ENCODE measurements at regions of chr2 and their contacts with region 1.

Region 1: GRCh38 chr2:71331581-71332434 is at the start of gene ZNF638:
- DNase-seq: peak; percentile 89 to 95
- H3K4me3 ChIP-seq: peak within 1 kb of the TSS; percentile 92
- H3K4me3 Mint-ChIP-seq: peak within 1 kb of the TSS; percentile 98
- H3K27ac Mint-ChIP-seq: peak within 1 kb of the TSS; percentile 99
- H3K4me1 ChIP-seq: peaks cover 11% of the 10 kb centered on the region; the same call in 1 of the 2 replicates
- H3K4me1 Mint-ChIP-seq: peaks cover 23% of the 10 kb centered on the region
- H3K27me3 ChIP-seq: no peaks in the 10 kb centered on the region
- H3K27me3 Mint-ChIP-seq: no peaks in the 10 kb centered on the region
- CTCF ChIP-seq: peak; percentile 68 to 77
- total RNA-seq, gene ZNF638: 133 and 134 TPM in 2 replicates

Region 2: DNA sequence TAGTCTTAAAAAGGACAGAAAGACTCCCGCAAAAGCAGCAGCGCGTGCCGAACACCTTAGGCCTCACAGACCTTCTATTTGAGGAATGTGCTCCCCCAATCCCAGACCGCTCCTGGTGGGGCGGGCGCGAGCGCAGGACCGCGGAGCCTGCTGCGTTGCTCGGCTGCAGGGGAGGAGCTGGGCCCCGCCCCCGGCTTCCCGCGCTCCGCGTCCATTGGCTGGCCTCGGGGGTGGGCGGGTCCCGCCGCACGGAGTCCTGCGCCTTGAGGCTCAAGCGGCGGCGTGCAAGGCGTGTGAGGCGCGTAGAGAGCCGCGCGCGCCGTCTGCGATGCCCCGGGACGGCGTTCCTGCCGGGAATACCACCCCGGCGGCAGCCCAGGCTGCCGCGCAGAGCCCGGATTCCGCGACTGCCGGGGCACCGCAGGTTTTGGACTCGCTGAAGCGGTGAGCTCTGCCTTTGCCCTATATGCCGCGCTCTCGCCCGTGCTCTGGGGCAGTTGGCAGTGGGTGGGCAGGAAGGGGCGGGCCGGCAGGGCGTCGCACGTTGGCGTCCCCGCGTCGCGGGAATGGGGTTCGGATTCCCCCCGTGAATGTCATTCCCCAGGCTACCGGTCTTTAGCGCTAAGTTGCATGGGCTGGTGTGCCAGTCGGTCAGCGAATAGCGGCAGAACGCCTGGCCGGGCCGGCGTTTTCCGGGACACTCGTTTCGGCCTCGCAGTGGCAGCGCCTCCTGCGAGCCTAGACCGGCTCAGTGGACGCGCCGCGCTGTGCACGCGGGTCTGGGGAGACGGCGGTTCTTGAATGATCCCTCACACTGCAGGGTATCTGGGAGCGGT is 55.3 kb before region 1 on chr2:
- CTCF ChIA-PET with region 1: interaction called, 18 read pairs
- POLR2A ChIA-PET with region 1: no interaction called
- intact Hi-C with region 1: no loop called
- DNase-seq: peak; percentile 93 to 99
- H3K4me3 ChIP-seq: peak overlapping the region; percentile 62
- H3K4me3 Mint-ChIP-seq: peak overlapping the region; percentile 74
- H3K27ac Mint-ChIP-seq: peak overlapping the region; percentile 71
- H3K4me1 ChIP-seq: peaks cover 7% of the 10 kb centered on the region; the same call in 1 of the 2 replicates
- H3K4me1 Mint-ChIP-seq: peaks cover 6% of the 10 kb centered on the region
- H3K27me3 ChIP-seq: no peaks in the 10 kb centered on the region
- H3K27me3 Mint-ChIP-seq: peaks cover 13% of the 10 kb centered on the region
- CTCF ChIP-seq: no peak

Region 3: DNA sequence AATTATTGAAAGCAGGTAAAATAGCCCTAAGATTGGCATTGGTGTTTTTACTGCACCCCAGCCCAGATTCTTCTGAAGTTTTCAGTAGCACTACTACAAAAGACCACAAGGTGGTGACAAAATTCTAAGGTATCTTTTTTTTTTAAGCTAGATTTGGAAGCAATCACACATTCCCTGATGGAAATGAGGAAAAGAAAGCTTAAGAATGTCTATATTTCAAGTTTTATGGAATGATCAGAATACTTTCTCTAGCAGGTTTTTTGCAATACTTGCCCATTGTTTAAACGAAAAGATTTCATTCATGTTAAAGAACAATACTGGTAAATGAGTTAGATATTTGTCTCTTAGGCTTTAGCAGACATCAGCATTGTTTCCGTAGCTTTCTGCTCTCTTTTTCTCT is 32.3 kb before region 1 on chr2:
- CTCF ChIA-PET with region 1: interaction called, 77 read pairs
- POLR2A ChIA-PET with region 1: interaction called, 13 read pairs
- intact Hi-C with region 1: loop called (anchors 1 kb)
- DNase-seq: peak in 1 of 2 experiments; percentile 53
- H3K4me3 ChIP-seq: no peak overlapping the region
- H3K4me3 Mint-ChIP-seq: no peak overlapping the region
- H3K27ac Mint-ChIP-seq: no peak overlapping the region
- H3K4me1 ChIP-seq: no peaks in the 10 kb centered on the region
- H3K4me1 Mint-ChIP-seq: no peaks in the 10 kb centered on the region
- H3K27me3 ChIP-seq: no peaks in the 10 kb centered on the region
- H3K27me3 Mint-ChIP-seq: no peaks in the 10 kb centered on the region
- CTCF ChIP-seq: peak; percentile 68 to 75

Region 4: GRCh38 chr2:71423817-71424420 is 92.1 kb after region 1 on chr2:
- CTCF ChIA-PET with region 1: no interaction called
- POLR2A ChIA-PET with region 1: interaction called, 11 read pairs
- intact Hi-C with region 1: no loop called
- DNase-seq: no peak
- H3K4me3 ChIP-seq: no peak overlapping the region
- H3K4me3 Mint-ChIP-seq: no peak overlapping the region
- H3K27ac Mint-ChIP-seq: no peak overlapping the region
- H3K4me1 ChIP-seq: no peaks in the 10 kb centered on the region
- H3K4me1 Mint-ChIP-seq: peaks cover 7% of the 10 kb centered on the region
- H3K27me3 ChIP-seq: no peaks in the 10 kb centered on the region
- H3K27me3 Mint-ChIP-seq: no peaks in the 10 kb centered on the region
- CTCF ChIP-seq: no peak

Region 5: DNA sequence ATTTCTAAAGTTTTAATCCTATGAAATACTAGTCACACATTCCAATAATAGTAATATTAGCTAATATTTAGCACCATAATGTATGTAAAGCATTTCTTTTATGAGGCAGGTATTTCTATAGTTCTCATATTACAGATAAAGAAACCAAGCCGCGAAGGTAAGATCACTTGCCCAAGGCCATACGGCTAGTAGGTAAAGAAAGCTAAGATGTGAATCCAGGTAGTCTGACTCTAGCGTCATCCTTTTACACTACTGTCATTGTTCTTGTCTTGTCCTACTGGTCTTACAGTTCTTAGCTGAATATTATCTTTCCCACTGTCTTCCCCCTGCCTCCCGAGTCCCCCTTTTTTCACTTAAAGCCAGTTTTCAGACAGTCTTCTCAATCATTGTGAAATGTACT is 115.5 kb after region 1 on chr2:
- CTCF ChIA-PET with region 1: no interaction called
- POLR2A ChIA-PET with region 1: no interaction called
- intact Hi-C with region 1: no loop called
- DNase-seq: no peak
- H3K4me3 ChIP-seq: no peak overlapping the region
- H3K4me3 Mint-ChIP-seq: no peak overlapping the region
- H3K27ac Mint-ChIP-seq: no peak overlapping the region
- H3K4me1 ChIP-seq: no peaks in the 10 kb centered on the region
- H3K4me1 Mint-ChIP-seq: peaks cover 40% of the 10 kb centered on the region
- H3K27me3 ChIP-seq: no peaks in the 10 kb centered on the region
- H3K27me3 Mint-ChIP-seq: no peaks in the 10 kb centered on the region
- CTCF ChIP-seq: no peak

Region 6: GRCh38 chr2:72293620-72294019 is 961.8 kb after region 1 on chr2:
- CTCF ChIA-PET with region 1: no interaction called
- POLR2A ChIA-PET with region 1: no interaction called
- intact Hi-C with region 1: no loop called
- DNase-seq: no peak
- H3K4me3 ChIP-seq: no peak overlapping the region
- H3K4me3 Mint-ChIP-seq: no peak overlapping the region
- H3K27ac Mint-ChIP-seq: no peak overlapping the region
- H3K4me1 ChIP-seq: no peaks in the 10 kb centered on the region
- H3K4me1 Mint-ChIP-seq: no peaks in the 10 kb centered on the region
- H3K27me3 ChIP-seq: no peaks in the 10 kb centered on the region
- H3K27me3 Mint-ChIP-seq: no peaks in the 10 kb centered on the region
- CTCF ChIP-seq: no peak

Measured in Caco-2 (cell line).